ENCODE measurements at regions of chr10 and their contacts with region 1.

Region 1: GRCh38 chr10:16545116-16545736 is 23.5 kb upstream of the C1QL3 start:
- DNase-seq: peak; percentile 21
- ATAC-seq: no peak
- H3K4me3 Mint-ChIP-seq: no peak overlapping the region
- H3K27ac Mint-ChIP-seq: no peak overlapping the region
- H3K4me1 Mint-ChIP-seq: no peaks in the 10 kb centered on the region
- H3K27me3 Mint-ChIP-seq: peaks cover 13% of the 10 kb centered on the region

Region 2: GRCh38 chr10:16314259-16314658 is 231.0 kb before region 1 on chr10:
- CTCF ChIA-PET with region 1: no interaction called
- POLR2A ChIA-PET with region 1: no interaction called
- intact Hi-C with region 1: loop called in 1 of 2 experiments (anchors 1 kb)
- DNase-seq: peak; percentile 7
- ATAC-seq: no peak
- H3K4me3 Mint-ChIP-seq: no peak overlapping the region
- H3K27ac Mint-ChIP-seq: no peak overlapping the region
- H3K4me1 Mint-ChIP-seq: no peaks in the 10 kb centered on the region
- H3K27me3 Mint-ChIP-seq: no peaks in the 10 kb centered on the region

Region 3: DNA sequence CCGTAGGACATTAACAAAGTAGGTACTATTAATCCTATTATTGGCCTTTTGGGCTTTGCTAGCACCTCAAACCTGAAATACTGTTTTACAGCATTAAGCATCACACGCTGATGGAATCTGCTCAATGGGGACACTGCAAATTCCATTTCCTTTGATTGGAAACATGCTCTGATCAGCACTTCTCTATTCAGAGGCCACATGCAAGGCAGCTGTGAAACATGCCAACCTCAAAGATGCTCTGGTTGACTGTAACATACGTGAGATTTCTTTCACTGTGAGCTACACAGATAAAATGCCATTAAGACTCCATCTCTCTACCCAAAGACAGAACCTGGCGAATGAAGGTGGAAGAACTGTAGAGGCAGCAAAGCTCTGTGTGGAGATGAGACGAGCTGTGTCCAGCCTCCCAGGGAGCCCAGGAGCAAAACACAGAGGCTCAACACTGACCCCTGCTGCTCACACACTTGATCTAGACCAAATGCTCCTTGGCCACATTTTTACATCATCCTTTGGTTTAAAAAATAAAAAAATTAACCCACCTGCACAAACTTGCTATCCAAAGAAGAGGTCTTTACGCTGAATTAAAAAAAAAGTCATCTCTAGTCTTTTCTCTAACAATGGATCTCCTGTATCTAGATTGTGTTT is 264.0 kb after region 1 on chr10:
- CTCF ChIA-PET with region 1: no interaction called
- POLR2A ChIA-PET with region 1: no interaction called
- intact Hi-C with region 1: loop called in 1 of 2 experiments (anchors 5 kb)
- DNase-seq: peak; percentile 79
- ATAC-seq: peak; percentile 94
- H3K4me3 Mint-ChIP-seq: no peak overlapping the region
- H3K27ac Mint-ChIP-seq: no peak overlapping the region
- H3K4me1 Mint-ChIP-seq: peaks cover 9% of the 10 kb centered on the region
- H3K27me3 Mint-ChIP-seq: no peaks in the 10 kb centered on the region

Measured in activated CD4-positive, alpha-beta T cell treated with anti-CD3 and anti-CD28 coated beads for 36 hours (primary cell).